ENCODE measurements at regions of chr20 and their contacts with region 1.

Region 1: GRCh38 chr20:59087829-59088433 is 45.3 kb upstream of the PRELID3B start:
- DNase-seq: peak; percentile 93
- H3K4me3 Mint-ChIP-seq: no peak overlapping the region
- H3K27ac Mint-ChIP-seq: no peak overlapping the region
- H3K4me1 Mint-ChIP-seq: no peaks in the 10 kb centered on the region
- H3K27me3 Mint-ChIP-seq: peaks cover 90% of the 10 kb centered on the region
- CTCF ChIP-seq: peak; percentile 86

Region 2: DNA sequence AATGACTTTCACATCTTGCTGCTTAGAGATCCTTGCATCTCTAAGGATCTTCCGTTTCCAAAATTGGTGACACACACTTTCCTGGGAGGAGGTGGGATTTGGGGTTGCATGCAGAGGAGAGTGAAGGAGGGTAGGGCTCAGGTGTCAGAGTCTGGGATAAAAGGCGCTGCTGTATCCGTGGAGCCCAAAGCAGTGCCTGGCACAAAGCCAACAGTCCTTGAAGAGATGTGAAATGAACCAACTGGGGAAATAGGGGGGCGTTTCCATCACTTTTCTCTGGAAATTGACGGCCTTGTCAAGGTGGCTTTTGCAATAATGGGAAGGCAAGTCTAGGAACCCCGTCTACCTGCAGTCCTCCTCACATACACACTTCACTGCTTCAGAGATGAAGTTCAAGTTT is 166.4 kb before region 1 on chr20:
- CTCF ChIA-PET with region 1: no interaction called
- intact Hi-C with region 1: no loop called
- DNase-seq: no peak
- H3K4me3 Mint-ChIP-seq: no peak overlapping the region
- H3K27ac Mint-ChIP-seq: no peak overlapping the region
- H3K4me1 Mint-ChIP-seq: no peaks in the 10 kb centered on the region
- H3K27me3 Mint-ChIP-seq: peaks cover 10% of the 10 kb centered on the region
- CTCF ChIP-seq: no peak

Region 3: DNA sequence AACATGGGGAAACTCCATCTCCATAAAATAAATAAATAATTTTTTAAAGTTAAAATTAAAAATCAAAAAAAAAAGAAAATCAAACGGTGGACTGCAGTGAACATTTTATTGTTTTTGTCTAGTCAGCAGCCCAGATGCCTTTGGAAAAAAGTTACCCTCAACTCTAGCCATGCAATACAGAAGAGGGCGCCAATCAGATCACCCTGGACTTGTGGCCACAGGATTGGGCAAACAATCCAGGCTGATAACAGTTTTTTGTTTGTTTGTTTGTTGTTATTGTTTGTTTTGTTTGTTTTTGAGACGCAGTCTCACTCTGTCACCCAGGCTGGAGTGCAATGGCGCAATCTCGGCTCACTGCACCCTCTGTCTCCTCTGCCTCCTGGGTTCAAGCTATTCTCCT is 137.3 kb before region 1 on chr20:
- CTCF ChIA-PET with region 1: no interaction called
- intact Hi-C with region 1: no loop called
- DNase-seq: no peak
- H3K4me3 Mint-ChIP-seq: no peak overlapping the region
- H3K27ac Mint-ChIP-seq: no peak overlapping the region
- H3K4me1 Mint-ChIP-seq: no peaks in the 10 kb centered on the region
- H3K27me3 Mint-ChIP-seq: no peaks in the 10 kb centered on the region
- CTCF ChIP-seq: no peak

Region 4: DNA sequence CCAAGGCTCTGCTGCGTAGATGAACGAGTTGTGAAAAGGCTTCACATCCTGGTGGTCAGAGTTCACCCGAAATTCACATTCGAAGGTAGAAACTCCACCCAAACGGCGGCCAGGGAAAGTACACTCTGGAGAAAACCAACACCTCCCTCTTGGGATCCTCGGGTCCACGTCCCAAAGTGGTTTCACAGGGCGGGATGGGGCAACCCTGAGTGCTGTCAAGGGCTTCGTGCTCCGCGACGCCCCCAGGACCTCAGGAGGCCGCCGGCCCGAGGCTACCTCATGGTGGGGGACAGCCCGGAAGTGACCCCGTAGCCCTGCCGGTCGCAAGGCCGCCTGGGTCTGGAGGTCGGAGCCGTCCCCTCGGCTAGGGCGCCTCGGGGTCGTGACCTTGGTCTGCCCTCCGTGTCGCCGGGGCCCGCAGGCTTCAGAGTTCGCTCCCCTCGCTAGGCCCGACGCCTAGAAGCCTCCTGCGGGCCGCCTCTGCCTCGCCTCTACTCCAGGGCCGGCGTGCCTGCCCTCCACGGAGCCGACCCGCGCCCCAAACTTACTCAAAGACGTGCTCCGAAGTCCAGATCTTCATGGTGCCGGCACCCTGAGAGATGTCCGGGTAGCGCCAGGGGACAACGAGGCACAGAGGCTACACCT is 45.7 kb before region 1 on chr20 and contains the start of gene PRELID3B:
- CTCF ChIA-PET with region 1: no interaction called
- intact Hi-C with region 1: no loop called
- DNase-seq: peak; percentile 45
- H3K4me3 Mint-ChIP-seq: peak within 1 kb of the TSS; percentile 63
- H3K27ac Mint-ChIP-seq: peak within 1 kb of the TSS; percentile 43
- H3K4me1 Mint-ChIP-seq: peaks cover 21% of the 10 kb centered on the region
- H3K27me3 Mint-ChIP-seq: peaks cover 4% of the 10 kb centered on the region
- CTCF ChIP-seq: no peak
- total RNA-seq, gene PRELID3B: 128 and 136 TPM in 2 replicates

Region 5: GRCh38 chr20:59125836-59126235 is 37.9 kb after region 1 on chr20:
- CTCF ChIA-PET with region 1: interaction called, 7 read pairs
- intact Hi-C with region 1: loop called (anchors 2 kb)
- DNase-seq: peak; percentile 43
- H3K4me3 Mint-ChIP-seq: no peak overlapping the region
- H3K27ac Mint-ChIP-seq: no peak overlapping the region
- H3K4me1 Mint-ChIP-seq: peaks cover 20% of the 10 kb centered on the region
- H3K27me3 Mint-ChIP-seq: peaks cover 59% of the 10 kb centered on the region
- CTCF ChIP-seq: no peak

Region 6: DNA sequence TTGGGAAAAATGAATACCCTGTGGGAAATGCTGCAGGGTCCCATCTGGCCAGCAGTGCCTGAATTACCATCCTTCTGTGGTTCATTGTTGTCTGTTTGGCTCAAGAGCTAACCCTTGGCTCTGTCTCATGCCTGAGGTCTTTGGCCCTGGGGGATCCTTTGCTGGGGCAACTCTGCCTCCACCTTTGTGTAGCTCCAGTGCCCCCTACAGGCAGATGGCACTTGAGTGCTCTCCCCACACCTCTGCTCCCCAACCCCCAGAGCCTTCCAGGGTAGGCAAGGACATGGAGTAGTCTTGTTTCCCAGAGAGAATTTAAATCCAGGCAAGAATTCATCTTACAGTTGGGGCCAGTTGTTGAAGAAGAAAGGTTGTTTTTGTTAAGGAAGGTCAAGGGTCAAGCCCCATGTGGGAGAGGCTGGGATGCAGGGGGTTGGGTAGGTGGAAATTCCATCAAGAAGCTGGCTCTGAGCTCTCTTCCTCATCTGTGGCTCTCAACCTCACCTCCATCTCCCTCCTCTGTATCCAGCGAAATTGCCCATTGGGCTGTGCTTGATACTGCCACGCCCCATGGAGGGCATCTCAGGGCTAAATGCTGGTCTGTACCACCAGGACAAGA is 119.9 kb after region 1 on chr20:
- CTCF ChIA-PET with region 1: interaction called, 9 read pairs
- intact Hi-C with region 1: loop called (anchors 5 kb)
- DNase-seq: peak; percentile 68
- H3K4me3 Mint-ChIP-seq: no peak overlapping the region
- H3K27ac Mint-ChIP-seq: no peak overlapping the region
- H3K4me1 Mint-ChIP-seq: no peaks in the 10 kb centered on the region
- H3K27me3 Mint-ChIP-seq: peaks cover 95% of the 10 kb centered on the region
- CTCF ChIP-seq: peak; percentile 39

Region 7: GRCh38 chr20:59403261-59403961 is 315.5 kb after region 1 on chr20:
- CTCF ChIA-PET with region 1: no interaction called
- intact Hi-C with region 1: loop called (anchors 5 kb)
- DNase-seq: peak; percentile 77
- H3K4me3 Mint-ChIP-seq: no peak overlapping the region
- H3K27ac Mint-ChIP-seq: no peak overlapping the region
- H3K4me1 Mint-ChIP-seq: no peaks in the 10 kb centered on the region
- H3K27me3 Mint-ChIP-seq: no peaks in the 10 kb centered on the region
- CTCF ChIP-seq: peak; percentile 98

Region 8: GRCh38 chr20:59866338-59866737 is 778.4 kb after region 1 on chr20:
- CTCF ChIA-PET with region 1: no interaction called
- intact Hi-C with region 1: no loop called
- DNase-seq: no peak
- H3K4me3 Mint-ChIP-seq: no peak overlapping the region
- H3K27ac Mint-ChIP-seq: no peak overlapping the region
- H3K4me1 Mint-ChIP-seq: no peaks in the 10 kb centered on the region
- H3K27me3 Mint-ChIP-seq: no peaks in the 10 kb centered on the region
- CTCF ChIP-seq: no peak

Measured in Calu3 (cell line).